ENCODE measurements at regions of chr22 and their contacts with region 1.

Region 1: DNA sequence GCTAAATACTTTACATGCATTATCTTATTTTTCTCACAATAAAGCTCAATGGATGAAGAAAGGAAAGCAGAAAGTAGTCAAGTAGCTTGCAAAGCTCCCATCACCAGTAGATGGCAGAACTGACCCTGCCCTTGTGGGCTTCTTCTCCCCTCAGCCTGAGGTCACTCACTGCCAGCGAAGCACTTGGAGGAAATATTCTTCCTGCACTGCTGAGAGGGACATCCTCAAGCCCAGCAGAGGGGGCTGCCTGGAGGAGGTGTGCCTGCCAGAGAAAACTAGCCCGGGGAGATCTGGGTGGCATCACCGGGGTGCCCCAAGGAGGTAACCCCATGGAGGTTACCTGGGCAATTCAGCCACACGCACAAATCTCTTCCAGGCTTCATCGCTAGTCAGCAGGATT is 6.6 kb downstream of the APOL4 start:
- DNase-seq: peak; percentile 32
- H3K4me3 ChIP-seq: no peak overlapping the region
- H3K27ac ChIP-seq: no peak overlapping the region
- H3K4me1 ChIP-seq: no peaks in the 10 kb centered on the region
- H3K27me3 ChIP-seq: no peaks in the 10 kb centered on the region
- CTCF ChIP-seq: peak; percentile 45 to 64

Region 2: DNA sequence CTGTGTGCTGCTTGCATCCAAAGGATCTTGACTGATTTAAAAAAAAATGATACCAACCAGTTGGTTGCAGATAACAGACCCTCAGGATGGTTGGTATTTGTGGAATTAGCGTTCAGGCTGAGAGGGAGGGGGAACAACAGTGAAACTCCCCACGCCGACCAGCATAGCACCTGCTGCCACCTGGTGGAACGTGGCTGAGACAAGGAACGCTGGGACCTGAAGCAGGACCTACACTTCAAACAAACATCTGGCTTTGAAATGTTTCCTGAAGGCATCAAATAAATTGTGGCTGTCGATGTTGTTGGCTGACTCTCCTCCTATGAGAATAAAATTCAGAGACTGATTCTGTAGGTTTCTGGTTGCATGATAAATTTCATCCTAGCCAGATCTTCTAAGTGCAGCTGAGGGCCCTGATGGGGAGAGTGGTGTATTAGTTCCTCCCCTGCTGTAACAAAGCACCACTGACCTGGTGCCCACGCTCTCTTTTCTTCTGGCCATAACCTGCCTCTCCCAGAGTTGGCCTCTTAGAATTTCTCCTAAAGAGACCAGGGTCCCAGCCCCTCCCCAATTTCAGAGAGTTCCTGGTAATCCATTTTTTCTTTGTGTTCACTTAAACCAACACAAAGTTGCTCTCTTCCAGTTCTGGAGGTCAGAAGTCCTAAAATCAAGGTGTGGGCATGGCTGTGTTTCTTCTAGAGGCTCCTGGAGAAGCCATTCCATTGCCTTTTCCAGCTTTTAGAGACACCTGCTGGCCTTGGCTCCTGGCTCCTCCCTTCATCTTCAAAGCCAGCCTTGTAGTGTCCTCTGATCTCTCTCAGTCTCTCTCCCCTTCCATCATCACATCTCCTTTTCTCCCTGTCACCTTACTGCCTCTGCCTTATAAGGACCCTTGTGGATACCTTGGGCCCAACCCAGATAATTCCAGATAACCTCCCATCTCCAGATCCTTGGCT is 27.1 kb after region 1 on chr22:
- CTCF ChIA-PET with region 1: no interaction called
- dilution Hi-C with region 1: loop called (anchors 5 kb)
- in situ Hi-C with region 1: no loop called
- intact Hi-C with region 1: loop called (anchors 1 kb)
- DNase-seq: peak; percentile 28
- H3K4me3 ChIP-seq: no peak overlapping the region
- H3K27ac ChIP-seq: no peak overlapping the region
- H3K4me1 ChIP-seq: no peaks in the 10 kb centered on the region
- H3K27me3 ChIP-seq: no peaks in the 10 kb centered on the region
- CTCF ChIP-seq: peak; percentile 76 to 83

Region 3: GRCh38 chr22:36227386-36227785 is 32.4 kb after region 1 on chr22:
- CTCF ChIA-PET with region 1: no interaction called
- dilution Hi-C with region 1: loop called (anchors 5 kb)
- in situ Hi-C with region 1: no loop called
- intact Hi-C with region 1: loop called (anchors 1 kb)
- DNase-seq: no peak
- H3K4me3 ChIP-seq: no peak overlapping the region
- H3K27ac ChIP-seq: no peak overlapping the region
- H3K4me1 ChIP-seq: no peaks in the 10 kb centered on the region
- H3K27me3 ChIP-seq: no peaks in the 10 kb centered on the region
- CTCF ChIP-seq: no peak

Region 4: GRCh38 chr22:36239401-36240171 is 44.6 kb after region 1 on chr22 and contains the start of gene APOL2:
- CTCF ChIA-PET with region 1: no interaction called
- dilution Hi-C with region 1: no loop called
- in situ Hi-C with region 1: no loop called
- intact Hi-C with region 1: loop called (anchors 1 kb)
- DNase-seq: peak; percentile 89
- H3K4me3 ChIP-seq: peak within 1 kb of the TSS; percentile 58 to 73 (median 71)
- H3K27ac ChIP-seq: peak within 1 kb of the TSS; percentile 39
- H3K4me1 ChIP-seq: peaks cover 18% of the 10 kb centered on the region
- H3K27me3 ChIP-seq: no peaks in the 10 kb centered on the region
- CTCF ChIP-seq: peak; percentile 52 to 79
- total RNA-seq, gene APOL2: 16.8 to 24.3 TPM

Region 5: DNA sequence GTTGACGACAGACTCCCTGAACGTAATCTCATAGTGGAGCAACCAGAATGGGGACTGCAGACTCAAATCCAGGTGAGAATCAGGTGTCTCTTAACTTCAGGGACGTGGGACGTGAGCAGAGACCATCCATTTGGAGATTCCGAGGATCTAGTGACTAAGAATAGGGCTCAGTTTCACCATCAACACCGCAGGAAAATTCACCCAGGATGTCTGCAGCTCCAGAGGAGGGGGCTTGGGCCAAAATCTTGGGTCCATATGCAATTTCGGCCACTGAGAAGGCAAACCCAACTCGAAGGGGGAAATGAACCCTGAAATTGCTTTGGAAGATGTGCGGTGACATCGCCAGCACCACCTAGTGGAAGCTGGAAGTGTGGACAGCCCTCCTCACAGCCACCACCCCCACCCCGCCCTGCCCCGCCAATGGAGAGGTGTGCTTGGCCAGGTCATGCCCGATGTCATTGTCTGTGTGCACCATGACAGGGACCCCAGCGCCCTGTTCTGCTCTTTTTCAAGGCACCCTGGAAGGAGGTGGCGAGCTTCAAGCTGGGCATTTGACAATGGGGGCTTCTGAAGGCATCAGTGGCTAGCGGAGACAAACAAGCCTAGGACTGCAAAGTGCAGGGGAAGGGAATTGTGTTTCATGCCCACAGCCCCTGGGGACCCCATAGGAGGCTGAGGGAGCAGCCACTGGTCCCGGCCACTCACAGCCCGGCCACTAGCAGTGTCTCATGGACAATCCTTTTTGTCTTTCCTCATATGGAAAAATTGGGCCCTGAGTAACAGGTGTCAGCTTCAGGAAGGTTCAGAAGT is 82.7 kb after region 1 on chr22:
- CTCF ChIA-PET with region 1: no interaction called
- dilution Hi-C with region 1: no loop called
- in situ Hi-C with region 1: no loop called
- intact Hi-C with region 1: loop called (anchors 1 kb)
- DNase-seq: peak; percentile 39
- H3K4me3 ChIP-seq: no peak overlapping the region
- H3K27ac ChIP-seq: no peak overlapping the region
- H3K4me1 ChIP-seq: no peaks in the 10 kb centered on the region
- H3K27me3 ChIP-seq: no peaks in the 10 kb centered on the region
- CTCF ChIP-seq: peak; percentile 57 to 75

Region 6: DNA sequence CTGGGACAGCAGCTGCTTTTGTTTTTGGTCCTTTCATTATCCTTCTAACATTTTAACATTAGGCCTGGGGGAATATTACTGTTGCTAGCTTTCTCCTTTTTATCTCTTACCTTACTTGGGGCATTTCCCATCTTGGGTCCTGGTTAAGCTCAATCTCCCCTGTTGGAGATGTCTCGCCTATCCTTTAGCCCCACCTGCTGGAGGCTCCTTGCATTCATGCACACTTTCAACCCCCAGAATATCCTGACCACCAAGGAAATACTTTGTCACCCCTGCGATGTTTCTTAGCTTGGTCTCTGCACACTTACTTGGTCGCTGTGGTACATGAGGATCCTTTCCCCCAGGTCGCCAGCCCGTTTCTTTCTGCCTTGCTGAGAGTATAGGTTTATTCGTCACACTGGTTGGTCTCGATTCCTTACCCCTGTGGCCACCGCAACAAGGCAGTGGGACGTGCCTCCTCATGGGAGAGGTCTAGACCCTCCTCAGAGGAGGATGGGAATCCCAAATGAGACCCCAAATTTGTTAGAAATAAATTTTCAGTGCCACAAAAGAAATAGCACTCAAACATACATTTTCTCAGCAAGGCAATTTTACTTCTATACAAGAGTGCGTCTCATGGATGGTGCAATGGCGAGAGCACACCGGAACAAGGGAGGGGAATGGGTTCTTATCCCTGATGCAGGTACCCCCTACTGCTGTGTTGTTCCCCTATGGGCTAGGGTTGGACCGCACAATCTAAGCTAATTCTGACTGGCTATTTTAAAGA is 291.8 kb after region 1 on chr22:
- CTCF ChIA-PET with region 1: no interaction called
- dilution Hi-C with region 1: no loop called
- in situ Hi-C with region 1: loop called in 1 of 2 experiments (anchors 25 kb)
- intact Hi-C with region 1: loop called (anchors 1 kb)
- DNase-seq: peak; percentile 47
- H3K4me3 ChIP-seq: no peak overlapping the region
- H3K27ac ChIP-seq: no peak overlapping the region
- H3K4me1 ChIP-seq: peaks cover 6% of the 10 kb centered on the region
- H3K27me3 ChIP-seq: no peaks in the 10 kb centered on the region
- CTCF ChIP-seq: peak; percentile 66 to 82